Breast epithelium (tissue), 4 donors: ENCODE measurements at regions of chr3 and their contacts with region 1.

Region 1: GRCh38 chr3:127667119-127667681 is 5.6 kb upstream of the ABTB1 start:
- DNase-seq: no peak
- H3K4me3 ChIP-seq: no peak overlapping the region
- H3K27ac ChIP-seq: no peak overlapping the region
- H3K4me1 ChIP-seq: peaks cover 0 to 3% of the 10 kb centered on the region in 2 donors
- H3K27me3 ChIP-seq: no peaks in the 10 kb centered on the region
- CTCF ChIP-seq: no peak
- POLR2A ChIP-seq: no peak

Region 2: GRCh38 chr3:126961191-126961790 is 705.9 kb before region 1 on chr3:
- intact Hi-C with region 1: no loop called
- DNase-seq: peak; percentile 39 to 52
- H3K4me3 ChIP-seq: no peak overlapping the region
- H3K27ac ChIP-seq: peak overlapping the region; percentile 50 to 78
- H3K4me1 ChIP-seq: peaks cover 8 to 10% of the 10 kb centered on the region in 2 donors
- H3K27me3 ChIP-seq: no peaks in the 10 kb centered on the region
- CTCF ChIP-seq: no peak
- POLR2A ChIP-seq: no peak

Region 3: DNA sequence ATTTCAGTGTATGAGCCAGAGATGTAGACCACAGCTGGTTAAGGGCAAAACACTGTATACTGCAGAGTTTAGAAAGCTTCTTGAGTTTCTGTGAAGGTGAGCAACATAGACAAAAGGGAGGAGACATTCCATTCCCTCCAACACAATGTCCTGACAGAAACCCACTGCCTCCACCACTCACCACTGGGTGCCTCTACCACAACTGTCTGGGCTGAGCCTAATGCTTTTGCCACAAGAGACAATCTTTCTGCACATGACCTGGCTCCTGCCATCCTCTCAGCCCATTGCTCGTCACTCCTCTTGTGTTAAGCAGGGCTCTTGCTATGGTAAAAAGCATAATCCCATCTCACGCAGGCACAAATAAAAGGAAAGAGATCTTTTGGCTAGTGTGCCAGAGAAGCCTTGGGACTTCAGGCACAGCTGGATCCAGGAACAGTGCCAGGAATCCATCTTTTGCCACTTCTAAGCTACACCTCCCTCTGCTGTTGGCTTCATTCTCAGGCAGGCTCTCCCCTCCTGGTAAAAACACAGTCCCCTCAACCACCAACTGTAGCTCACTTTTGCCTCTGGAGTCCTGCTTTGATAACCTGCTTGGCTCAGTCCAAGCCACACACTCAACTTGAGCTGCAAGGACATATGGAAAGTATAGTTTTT is 238.7 kb before region 1 on chr3:
- intact Hi-C with region 1: no loop called
- DNase-seq: no peak
- H3K4me3 ChIP-seq: no peak overlapping the region
- H3K27ac ChIP-seq: no peak overlapping the region
- H3K4me1 ChIP-seq: no peaks in the 10 kb centered on the region
- H3K27me3 ChIP-seq: peaks cover 0 to 23% of the 10 kb centered on the region in 2 donors
- CTCF ChIP-seq: no peak
- POLR2A ChIP-seq: no peak

Region 4: GRCh38 chr3:127637546-127637945 is 29.7 kb before region 1 on chr3:
- intact Hi-C with region 1: no loop called
- DNase-seq: no peak
- H3K4me3 ChIP-seq: no peak overlapping the region
- H3K27ac ChIP-seq: no peak overlapping the region
- H3K4me1 ChIP-seq: no peaks in the 10 kb centered on the region
- H3K27me3 ChIP-seq: no peaks in the 10 kb centered on the region
- CTCF ChIP-seq: no peak
- POLR2A ChIP-seq: no peak

Region 5: DNA sequence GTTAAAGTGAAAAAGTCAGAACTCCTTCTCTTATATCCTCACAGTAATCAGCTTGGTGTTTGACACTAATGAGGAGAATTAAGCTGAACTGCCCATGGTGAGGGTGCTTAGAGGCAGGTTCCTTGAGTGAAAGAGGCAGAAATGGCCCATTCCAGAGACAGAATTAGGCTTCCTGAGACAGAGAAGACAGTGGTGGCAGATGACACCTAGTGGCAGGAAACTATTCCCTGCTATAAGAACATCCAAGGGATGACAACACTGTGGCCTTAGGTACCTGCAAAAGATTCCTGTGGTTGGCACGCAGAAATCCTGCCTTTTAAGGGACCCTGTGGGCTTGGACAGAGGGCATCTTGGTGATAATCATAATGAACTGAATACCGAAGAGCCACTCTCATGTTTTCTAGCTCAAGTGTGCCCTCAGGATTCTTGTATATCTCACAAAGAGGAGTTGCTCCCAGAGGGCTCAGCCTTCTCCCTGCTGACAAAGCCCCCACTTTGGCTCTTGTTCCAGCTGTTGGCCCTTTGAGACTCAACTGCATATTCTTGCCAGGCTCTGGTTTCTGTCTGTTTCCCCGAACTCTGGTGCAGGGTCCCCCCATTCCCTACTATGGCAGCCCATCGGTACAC is 303.9 kb after region 1 on chr3:
- intact Hi-C with region 1: loop called (anchors 10 kb)
- DNase-seq: peak in 1 of 2 donors; percentile 23
- H3K4me3 ChIP-seq: no peak overlapping the region
- H3K27ac ChIP-seq: no peak overlapping the region
- H3K4me1 ChIP-seq: no peaks in the 10 kb centered on the region
- H3K27me3 ChIP-seq: no peaks in the 10 kb centered on the region
- CTCF ChIP-seq: peak; percentile 66 to 70 (median 68)
- POLR2A ChIP-seq: no peak